ENCODE measurements at regions of chr4 and their contacts with region 1.

Region 1: GRCh38 chr4:113773014-113773413 is 11.5 kb upstream of the CAMK2D start:
- DNase-seq: no peak
- ATAC-seq: no peak
- H3K4me3 ChIP-seq: no peak overlapping the region
- H3K27ac ChIP-seq: no peak overlapping the region
- H3K4me1 ChIP-seq: no peaks in the 10 kb centered on the region
- H3K27me3 ChIP-seq: no peaks in the 10 kb centered on the region
- CTCF ChIP-seq: no peak
- POLR2A ChIP-seq: no peak
- RAD21 ChIP-seq: no peak

Region 2: GRCh38 chr4:113404841-113405240 is 368.2 kb before region 1 on chr4:
- CTCF ChIA-PET with region 1: no interaction called
- POLR2A ChIA-PET with region 1: no interaction called
- dilution Hi-C with region 1: no loop called
- in situ Hi-C with region 1: loop called (anchors 10 kb)
- intact Hi-C with region 1: no loop called
- DNase-seq: no peak
- ATAC-seq: peak; percentile 24; the same call in 1 of the 2 replicates
- H3K4me3 ChIP-seq: no peak overlapping the region
- H3K27ac ChIP-seq: no peak overlapping the region
- H3K4me1 ChIP-seq: no peaks in the 10 kb centered on the region
- H3K27me3 ChIP-seq: no peaks in the 10 kb centered on the region
- CTCF ChIP-seq: no peak
- POLR2A ChIP-seq: no peak
- RAD21 ChIP-seq: no peak

Region 3: DNA sequence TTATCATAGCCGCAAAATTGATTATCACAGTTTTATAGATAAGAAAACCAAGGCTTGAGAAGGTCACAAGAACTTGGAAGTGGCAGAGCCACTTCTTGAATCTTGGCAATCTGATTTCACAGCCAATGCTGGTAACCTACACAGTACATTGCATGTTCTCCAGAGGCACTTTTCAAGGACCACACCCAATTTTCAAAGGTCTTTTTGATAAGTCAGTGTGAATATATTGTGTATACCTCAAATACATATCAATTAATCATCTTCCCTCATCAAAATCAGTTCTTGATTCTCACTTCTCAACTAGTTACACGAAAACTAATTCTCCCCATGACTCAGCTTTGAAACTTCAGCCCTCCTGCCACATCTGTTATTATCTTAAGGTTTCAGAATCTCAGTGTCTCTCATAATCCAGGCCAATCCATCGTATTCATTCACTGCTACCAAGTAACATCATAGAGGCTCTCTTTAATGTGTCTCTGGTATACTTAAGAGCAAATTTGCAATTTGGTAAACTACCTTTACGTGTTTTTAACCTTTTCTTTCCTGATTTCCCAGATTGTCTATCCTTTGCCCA is 28.3 kb before region 1 on chr4:
- CTCF ChIA-PET with region 1: no interaction called
- POLR2A ChIA-PET with region 1: no interaction called
- dilution Hi-C with region 1: no loop called
- in situ Hi-C with region 1: no loop called
- intact Hi-C with region 1: no loop called
- DNase-seq: no peak
- ATAC-seq: peak; percentile 37; the same call in 1 of the 2 replicates
- H3K4me3 ChIP-seq: no peak overlapping the region
- H3K27ac ChIP-seq: no peak overlapping the region
- H3K4me1 ChIP-seq: no peaks in the 10 kb centered on the region
- H3K27me3 ChIP-seq: no peaks in the 10 kb centered on the region
- CTCF ChIP-seq: no peak
- POLR2A ChIP-seq: no peak
- RAD21 ChIP-seq: no peak